ENCODE measurements at regions of chr1 and their contacts with region 1.

Region 1: GRCh38 chr1:26321315-26322041 is 3.7 kb downstream of the CD52 start:
- DNase-seq: peak; percentile 99
- H3K4me3 ChIP-seq: no peak overlapping the region
- H3K27ac ChIP-seq: no peak overlapping the region
- H3K4me1 ChIP-seq: peaks cover 7 to 22% (median 15%) of the 10 kb centered on the region in 4 donors
- H3K27me3 ChIP-seq: peaks cover 0 to 18% (median 2%) of the 10 kb centered on the region in 4 donors
- CTCF ChIP-seq: peak; percentile 83 to 97 (median 91)
- EP300 ChIP-seq: no peak
- POLR2A ChIP-seq: no peak

Region 2: GRCh38 chr1:25879675-25880074 is 441.8 kb before region 1 on chr1:
- intact Hi-C with region 1: no loop called
- DNase-seq: no peak
- H3K4me3 ChIP-seq: no peak overlapping the region
- H3K27ac ChIP-seq: no peak overlapping the region
- H3K4me1 ChIP-seq: peaks cover 9 to 16% (median 14%) of the 10 kb centered on the region in 4 donors
- H3K27me3 ChIP-seq: no peaks in the 10 kb centered on the region
- CTCF ChIP-seq: no peak
- EP300 ChIP-seq: no peak
- POLR2A ChIP-seq: no peak

Region 3: DNA sequence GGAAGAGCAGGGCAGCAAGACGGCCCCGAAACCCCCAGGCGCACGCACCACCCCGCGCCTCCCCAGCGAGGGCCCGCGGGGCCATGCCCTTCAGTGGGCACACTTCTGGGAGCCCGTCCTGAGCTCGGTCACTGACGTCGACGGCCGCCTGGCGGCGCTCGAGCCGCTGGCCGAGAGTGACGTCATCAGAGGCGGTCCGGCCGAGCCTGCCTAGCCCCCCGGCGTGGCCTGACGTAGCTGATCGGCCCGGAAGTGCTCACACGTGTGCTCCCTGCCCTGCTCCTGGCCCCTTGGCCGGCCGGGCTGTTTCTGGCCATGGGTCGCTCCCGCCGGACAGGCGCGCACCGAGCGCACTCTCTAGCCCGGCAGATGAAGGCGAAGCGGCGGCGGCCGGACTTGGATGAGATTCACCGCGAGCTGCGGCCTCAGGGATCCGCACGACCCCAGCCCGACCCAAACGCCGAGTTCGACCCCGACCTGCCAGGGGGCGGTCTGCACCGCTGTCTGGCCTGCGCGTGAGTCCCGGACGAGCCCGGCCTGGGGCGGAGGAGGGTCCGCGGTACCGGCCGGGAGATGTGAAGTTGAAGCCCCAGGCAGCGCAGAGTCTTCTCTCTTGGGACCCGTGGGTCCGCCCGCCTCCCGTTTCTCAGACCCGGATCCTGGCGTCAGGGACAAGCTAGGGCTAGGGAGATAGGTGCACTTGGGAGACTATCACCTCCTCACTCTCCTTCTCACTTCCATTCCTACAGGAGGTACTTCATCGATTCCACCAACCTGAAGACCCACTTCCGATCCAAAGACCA is 151.6 kb before region 1 on chr1 and contains the start of gene ZNF593:
- intact Hi-C with region 1: loop called (anchors 5 kb)
- DNase-seq: peak; percentile 97
- H3K4me3 ChIP-seq: peak within 1 kb of the TSS; percentile 74 to 97 (median 91)
- H3K27ac ChIP-seq: peak within 1 kb of the TSS; percentile 77 to 89 (median 77)
- H3K4me1 ChIP-seq: peaks cover 20 to 28% (median 24%) of the 10 kb centered on the region in 4 donors
- H3K27me3 ChIP-seq: no peaks in the 10 kb centered on the region
- CTCF ChIP-seq: peak; percentile 87 to 93 (median 92)
- EP300 ChIP-seq: no peak
- POLR2A ChIP-seq: peak; percentile 66
- total RNA-seq, gene ZNF593: 10.4 to 41.6 (median 22.5) TPM

Region 4: DNA sequence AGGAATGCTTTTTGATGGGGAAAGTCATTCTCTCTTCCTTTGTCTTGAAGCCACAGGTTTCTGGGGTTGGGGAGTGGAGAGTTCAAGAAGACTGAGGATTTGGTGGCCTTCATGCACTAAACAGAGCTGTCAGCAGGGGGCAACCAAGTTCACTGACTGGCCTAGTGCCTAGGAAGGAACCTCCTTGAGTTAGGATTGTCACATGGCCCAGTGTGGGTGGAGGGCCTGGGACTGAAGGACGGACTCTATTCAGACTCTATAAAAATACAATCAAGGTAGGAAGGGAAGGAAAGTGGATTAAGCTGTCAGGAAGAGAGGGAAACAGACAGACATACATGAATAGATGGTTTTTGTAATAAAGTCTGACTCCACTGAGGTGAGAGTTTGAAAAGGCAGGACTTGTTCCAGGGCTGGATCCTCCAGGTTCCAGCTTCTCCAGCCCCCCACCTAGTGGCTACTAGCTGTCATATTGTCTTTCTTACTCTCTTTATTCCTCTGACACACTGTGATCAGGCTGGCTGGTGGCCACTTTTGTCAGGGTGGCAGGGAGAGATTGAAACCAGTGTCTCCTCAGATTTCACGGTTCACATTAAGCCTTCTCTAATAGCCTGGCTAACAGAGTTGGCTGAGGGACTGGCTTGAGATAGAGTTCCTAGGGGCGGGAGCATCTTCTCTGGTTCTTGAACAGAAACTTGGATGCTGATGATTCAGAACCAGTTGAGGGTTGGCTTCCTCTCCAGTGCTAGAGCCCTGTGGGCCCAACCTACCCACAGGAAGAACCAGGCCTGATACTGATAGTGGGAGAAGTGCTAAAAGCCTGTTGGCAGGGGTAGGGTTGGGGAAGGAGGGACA is 45.7 kb before region 1 on chr1:
- intact Hi-C with region 1: loop called (anchors 1 kb)
- DNase-seq: peak; percentile 95
- H3K4me3 ChIP-seq: peak overlapping the region in 1 of 4 donors; percentile 1
- H3K27ac ChIP-seq: peak overlapping the region; percentile 85 to 96 (median 91)
- H3K4me1 ChIP-seq: peaks cover 43 to 54% (median 53%) of the 10 kb centered on the region in 4 donors
- H3K27me3 ChIP-seq: no peaks in the 10 kb centered on the region
- CTCF ChIP-seq: peak; percentile 80 to 95 (median 84)
- EP300 ChIP-seq: no peak
- POLR2A ChIP-seq: no peak

Region 5: GRCh38 chr1:26336477-26337205 is 15.2 kb after region 1 on chr1:
- intact Hi-C with region 1: loop called (anchors 1 kb)
- DNase-seq: no peak
- H3K4me3 ChIP-seq: peak overlapping the region; percentile 48 to 62 (median 51)
- H3K27ac ChIP-seq: no peak overlapping the region
- H3K4me1 ChIP-seq: peaks cover 12 to 18% (median 14%) of the 10 kb centered on the region in 4 donors
- H3K27me3 ChIP-seq: peaks cover 0 to 55% (median 25%) of the 10 kb centered on the region in 4 donors
- CTCF ChIP-seq: no peak
- EP300 ChIP-seq: no peak
- POLR2A ChIP-seq: no peak